IMR-90 (cell line): ENCODE measurements at regions of chr17 and their contacts with region 1.

Region 1: GRCh38 chr17:50865984-50866774 is at the start of gene TOB1:
- DNase-seq: peak; percentile 93
- ATAC-seq: peak; percentile 90
- H3K4me3 ChIP-seq: peak within 1 kb of the TSS; percentile 97
- H3K27ac ChIP-seq: peak within 1 kb of the TSS; percentile 90
- H3K4me1 ChIP-seq: peaks cover 4% of the 10 kb centered on the region
- H3K27me3 ChIP-seq: no peaks in the 10 kb centered on the region
- CTCF ChIP-seq: no peak
- POLR2A ChIP-seq: peak; percentile 100
- RAD21 ChIP-seq: no peak
- total RNA-seq, gene TOB1: 4.3 and 6.1 TPM in 2 replicates

Region 2: GRCh38 chr17:50919321-50920085 is 53.3 kb after region 1 on chr17:
- CTCF ChIA-PET with region 1: no interaction called
- POLR2A ChIA-PET with region 1: interaction called, 10 read pairs
- dilution Hi-C with region 1: no loop called
- in situ Hi-C with region 1: no loop called
- intact Hi-C with region 1: no loop called
- DNase-seq: peak; percentile 82
- ATAC-seq: peak; percentile 96
- H3K4me3 ChIP-seq: no peak overlapping the region
- H3K27ac ChIP-seq: no peak overlapping the region
- H3K4me1 ChIP-seq: peaks cover 8% of the 10 kb centered on the region
- H3K27me3 ChIP-seq: no peaks in the 10 kb centered on the region
- CTCF ChIP-seq: no peak
- POLR2A ChIP-seq: no peak
- RAD21 ChIP-seq: no peak

Region 3: GRCh38 chr17:50949989-50950881 is 84.1 kb after region 1 on chr17:
- CTCF ChIA-PET with region 1: interaction called, 20 read pairs
- POLR2A ChIA-PET with region 1: interaction called, 21 read pairs
- dilution Hi-C with region 1: no loop called
- in situ Hi-C with region 1: loop called (anchors 5 kb)
- intact Hi-C with region 1: loop called (anchors 2 kb)
- DNase-seq: peak; percentile 84
- ATAC-seq: peak; percentile 91
- H3K4me3 ChIP-seq: no peak overlapping the region
- H3K27ac ChIP-seq: peak overlapping the region; percentile 35
- H3K4me1 ChIP-seq: peaks cover 39% of the 10 kb centered on the region
- H3K27me3 ChIP-seq: no peaks in the 10 kb centered on the region
- CTCF ChIP-seq: peak; percentile 74
- POLR2A ChIP-seq: no peak
- RAD21 ChIP-seq: peak; percentile 84

Region 4: DNA sequence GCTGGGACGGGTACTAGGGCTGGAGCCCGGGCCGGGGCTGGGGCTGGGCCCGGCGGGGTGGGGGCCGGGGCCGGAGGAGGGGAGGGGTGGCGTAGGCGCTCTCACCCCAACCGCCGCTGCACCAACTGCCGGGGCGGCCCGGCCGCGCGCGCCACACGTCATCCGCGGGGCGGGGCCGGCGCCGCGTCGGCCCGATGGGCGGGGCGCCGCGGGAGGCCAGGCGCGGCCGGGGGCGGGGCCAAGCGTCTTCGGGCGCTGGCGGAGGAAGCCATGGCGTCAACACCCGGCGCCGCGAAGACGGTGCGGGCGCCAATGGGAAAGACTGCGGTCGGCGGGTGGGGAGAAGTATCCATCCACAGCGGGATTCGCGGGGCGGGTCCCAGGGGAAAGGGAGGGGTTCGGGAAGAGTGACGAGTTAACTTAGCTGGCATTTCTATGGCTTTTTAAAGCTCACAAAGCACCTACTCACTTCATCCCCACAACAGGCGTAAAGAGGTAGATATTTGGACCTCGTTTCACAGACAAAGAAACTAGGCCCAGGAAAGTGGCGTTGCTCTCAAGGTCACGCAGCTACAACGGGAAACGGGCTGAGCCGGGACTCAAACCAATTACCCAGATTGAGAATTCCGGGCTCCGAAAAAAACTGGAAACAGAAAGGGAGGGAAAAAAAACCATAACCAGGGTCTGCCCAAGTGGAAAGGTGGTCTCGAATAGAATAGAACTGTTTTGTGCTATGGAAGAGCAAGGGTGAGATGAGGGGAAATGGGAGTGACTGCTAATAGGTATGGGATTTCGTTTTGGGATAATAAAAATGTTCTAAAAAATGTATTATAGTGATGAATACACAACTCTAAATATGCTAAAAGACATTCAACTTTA is 254.8 kb after region 1 on chr17 and contains the start of gene SPAG9:
- CTCF ChIA-PET with region 1: no interaction called
- POLR2A ChIA-PET with region 1: no interaction called
- dilution Hi-C with region 1: no loop called
- in situ Hi-C with region 1: no loop called
- intact Hi-C with region 1: loop called (anchors 10 kb)
- DNase-seq: peak; percentile 94
- ATAC-seq: peak; percentile 91
- H3K4me3 ChIP-seq: peak within 1 kb of the TSS; percentile 90
- H3K27ac ChIP-seq: peak within 1 kb of the TSS; percentile 93
- H3K4me1 ChIP-seq: peaks cover 6% of the 10 kb centered on the region
- H3K27me3 ChIP-seq: no peaks in the 10 kb centered on the region
- CTCF ChIP-seq: no peak
- POLR2A ChIP-seq: peak; percentile 96
- RAD21 ChIP-seq: no peak
- total RNA-seq, gene SPAG9: 75.5 and 93.9 TPM in 2 replicates